ENCODE measurements at regions of chr15 and their contacts with region 1.

Region 1: GRCh38 chr15:29090617-29091466 is 178.8 kb downstream of the NSMCE3 start:
- DNase-seq: peak; percentile 56 to 78 (median 74)
- ATAC-seq: peak; percentile 90
- H3K4me3 ChIP-seq: no peak overlapping the region
- H3K27ac ChIP-seq: no peak overlapping the region
- H3K4me1 ChIP-seq: peaks cover 0 to 10% of the 10 kb centered on the region in 2 experiments; a peak in 2 of 5 replicates
- H3K27me3 ChIP-seq: no peaks in the 10 kb centered on the region
- CTCF ChIP-seq: peak; percentile 73 to 85 (median 78)
- EP300 ChIP-seq: no peak
- POLR2A ChIP-seq: no peak
- RAD21 ChIP-seq: peak; percentile 23 to 65; a peak in 3 of 4 replicates

Region 2: DNA sequence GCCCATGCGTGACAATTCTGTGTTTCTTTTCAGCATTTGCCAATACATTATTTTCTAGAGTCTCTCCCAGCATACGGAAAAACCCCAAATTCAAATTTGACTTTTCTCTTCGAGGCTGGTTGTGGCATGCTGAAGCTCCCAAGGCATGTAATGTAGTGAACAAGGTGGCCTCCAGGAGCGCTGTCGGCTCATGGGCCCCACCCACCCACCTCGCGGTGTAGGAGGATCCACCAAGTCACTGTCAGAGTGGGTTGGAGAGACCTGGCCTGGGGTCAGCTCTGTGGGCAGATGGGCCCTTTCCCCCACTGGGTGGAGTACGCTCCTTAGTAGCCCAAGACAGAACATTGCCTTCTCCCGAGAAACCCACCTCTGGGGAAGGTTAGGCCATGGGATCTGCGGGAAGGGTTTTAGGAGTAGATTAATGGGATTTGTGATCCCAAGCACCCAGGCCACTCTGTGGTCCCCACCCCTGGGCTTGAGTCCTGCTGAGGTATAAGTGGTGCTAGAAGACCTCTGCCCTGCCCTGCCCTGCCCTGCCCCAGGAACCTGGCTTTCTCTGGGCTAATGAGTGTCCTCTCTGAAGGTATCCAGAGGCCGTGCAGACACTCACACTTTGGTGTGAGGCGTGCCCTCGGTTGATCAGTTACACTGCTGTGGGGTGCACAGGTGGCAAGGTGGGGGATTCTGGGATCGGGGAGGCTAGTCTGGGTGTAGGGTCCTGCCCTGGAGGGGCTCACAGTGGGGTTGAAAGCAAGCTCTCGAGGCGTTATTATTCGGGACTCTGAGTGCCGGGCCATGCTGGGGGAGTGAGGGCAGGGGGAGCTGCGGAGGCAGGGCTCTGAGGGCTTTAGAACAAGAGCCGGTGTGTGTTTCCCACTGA is 107.2 kb before region 1 on chr15:
- CTCF ChIA-PET with region 1: no interaction called
- POLR2A ChIA-PET with region 1: no interaction called
- in situ Hi-C with region 1: no loop called
- intact Hi-C with region 1: loop called (anchors 1 kb)
- DNase-seq: peak; percentile 64 to 70 (median 66)
- ATAC-seq: peak; percentile 96
- H3K4me3 ChIP-seq: no peak overlapping the region
- H3K27ac ChIP-seq: no peak overlapping the region
- H3K4me1 ChIP-seq: peaks cover 4 to 20% of the 10 kb centered on the region in 2 experiments; a peak in 3 of 5 replicates
- H3K27me3 ChIP-seq: no peaks in the 10 kb centered on the region
- CTCF ChIP-seq: peak; percentile 63 to 75 (median 71)
- EP300 ChIP-seq: no peak
- POLR2A ChIP-seq: no peak
- RAD21 ChIP-seq: peak in 1 of 2 experiments; percentile 35; a peak in 2 of 4 replicates

Region 3: GRCh38 chr15:29018120-29018805 is 72.6 kb before region 1 on chr15:
- CTCF ChIA-PET with region 1: no interaction called
- POLR2A ChIA-PET with region 1: no interaction called
- in situ Hi-C with region 1: no loop called
- intact Hi-C with region 1: no loop called
- DNase-seq: no peak
- ATAC-seq: peak; percentile 59
- H3K4me3 ChIP-seq: no peak overlapping the region
- H3K27ac ChIP-seq: no peak overlapping the region
- H3K4me1 ChIP-seq: peaks cover 0 to 4% of the 10 kb centered on the region in 2 experiments; a peak in 2 of 5 replicates
- H3K27me3 ChIP-seq: no peaks in the 10 kb centered on the region
- CTCF ChIP-seq: no peak
- EP300 ChIP-seq: no peak
- POLR2A ChIP-seq: no peak
- RAD21 ChIP-seq: no peak

Region 4: DNA sequence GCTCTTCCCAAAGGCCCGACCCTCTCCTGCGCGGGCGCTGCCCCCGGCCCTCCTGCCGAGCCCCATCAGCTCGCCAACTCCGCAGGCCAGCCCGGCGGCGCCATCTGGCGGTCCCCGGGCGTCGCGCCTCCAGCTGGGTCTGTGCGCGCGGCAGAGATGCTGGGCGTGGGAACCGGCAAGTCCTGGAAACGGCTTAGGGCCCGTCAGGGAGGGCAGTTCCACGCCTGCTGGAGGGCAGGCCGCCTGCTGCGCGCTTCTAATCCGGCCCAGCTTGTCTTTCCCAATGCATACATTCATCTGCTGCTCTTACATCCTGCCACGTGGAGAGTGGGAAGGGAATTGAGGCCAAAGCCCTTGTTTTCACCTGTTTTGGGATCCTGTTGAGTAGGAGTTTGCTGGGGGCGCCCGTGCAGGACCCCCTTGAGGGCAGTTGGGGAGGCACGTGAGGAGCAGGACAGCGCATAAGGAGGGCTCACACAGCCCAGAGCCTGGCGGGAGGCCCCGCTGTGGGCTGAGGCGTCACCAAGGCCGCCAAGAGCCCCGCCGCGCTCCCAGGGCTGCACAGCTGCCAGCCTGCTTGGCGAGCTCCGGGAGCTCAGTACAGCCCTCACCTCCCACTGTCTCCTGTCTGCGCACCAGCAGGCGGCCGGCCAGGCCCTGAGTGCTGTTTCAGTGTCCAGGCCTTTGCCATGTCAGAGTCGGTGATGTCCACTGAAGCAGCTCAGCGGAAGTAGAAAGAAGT is 13.2 kb after region 1 on chr15:
- CTCF ChIA-PET with region 1: no interaction called
- POLR2A ChIA-PET with region 1: no interaction called
- in situ Hi-C with region 1: no loop called
- intact Hi-C with region 1: no loop called
- DNase-seq: no peak
- ATAC-seq: no peak
- H3K4me3 ChIP-seq: no peak overlapping the region
- H3K27ac ChIP-seq: no peak overlapping the region
- H3K4me1 ChIP-seq: no peaks in the 10 kb centered on the region
- H3K27me3 ChIP-seq: no peaks in the 10 kb centered on the region
- CTCF ChIP-seq: no peak
- EP300 ChIP-seq: no peak
- POLR2A ChIP-seq: no peak
- RAD21 ChIP-seq: no peak

Measured in K562 (cell line).